Motor neuron (in vitro differentiated cells): ENCODE measurements at regions of chr9 and their contacts with region 1.

Region 1: DNA sequence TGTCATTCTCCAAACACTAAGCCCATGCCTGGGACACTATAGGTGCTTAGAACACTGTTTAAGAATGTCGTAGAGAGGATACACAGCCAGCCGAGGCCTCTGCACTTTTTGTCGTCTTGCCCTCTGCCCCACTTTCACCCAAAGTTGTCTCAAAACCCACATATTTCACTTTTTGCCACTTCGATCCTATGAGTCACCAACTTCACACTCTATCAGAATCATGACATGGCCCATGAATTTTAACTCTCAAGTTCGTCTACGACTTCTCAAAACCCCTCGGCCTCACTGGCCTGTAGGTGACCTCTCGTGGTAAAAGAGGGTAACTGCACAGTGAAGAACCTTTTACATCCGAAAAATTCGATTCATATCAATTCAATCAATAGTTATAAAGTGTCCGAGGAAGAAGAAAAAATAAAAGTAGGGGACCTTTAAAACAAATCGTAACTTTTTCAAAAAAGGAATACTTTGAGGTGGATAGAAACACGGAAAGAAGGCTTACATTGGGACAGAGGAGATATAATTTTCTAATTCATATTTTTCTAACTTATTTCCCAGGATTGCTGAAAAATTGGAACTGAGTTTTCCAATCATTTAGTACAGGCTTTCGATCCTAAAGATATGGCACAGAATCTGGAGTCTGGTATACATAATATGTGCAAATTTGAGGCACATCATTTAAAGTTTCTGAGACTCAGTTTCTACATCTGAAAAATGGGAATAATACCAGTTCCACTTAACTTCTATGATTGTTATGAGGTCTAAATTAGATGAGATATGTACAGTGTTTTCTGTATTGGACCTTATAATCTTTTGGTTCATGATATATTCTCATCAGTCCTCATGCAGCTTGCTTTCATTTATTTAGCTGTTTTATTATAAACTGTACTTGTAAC is 122.6 kb downstream of the APBA1 start:
- ATAC-seq: peak in 3 of 8 experiments; percentile 29 to 57 (median 45)
- H3K4me3 ChIP-seq: no peak overlapping the region
- H3K27ac ChIP-seq: no peak overlapping the region
- H3K4me1 ChIP-seq: peaks cover 0 to 2% of the 10 kb centered on the region in 2 donors

Region 2: GRCh38 chr9:69421908-69422801 is 127.4 kb before region 1 on chr9:
- in situ Hi-C with region 1: loop called in 3 of 9 experiments (anchors 10 to 25 kb)
- ATAC-seq: peak; percentile 61 to 80 (median 68)
- H3K4me3 ChIP-seq: no peak overlapping the region
- H3K27ac ChIP-seq: no peak overlapping the region
- H3K4me1 ChIP-seq: peaks cover 0 to 2% of the 10 kb centered on the region in 2 donors

Region 3: DNA sequence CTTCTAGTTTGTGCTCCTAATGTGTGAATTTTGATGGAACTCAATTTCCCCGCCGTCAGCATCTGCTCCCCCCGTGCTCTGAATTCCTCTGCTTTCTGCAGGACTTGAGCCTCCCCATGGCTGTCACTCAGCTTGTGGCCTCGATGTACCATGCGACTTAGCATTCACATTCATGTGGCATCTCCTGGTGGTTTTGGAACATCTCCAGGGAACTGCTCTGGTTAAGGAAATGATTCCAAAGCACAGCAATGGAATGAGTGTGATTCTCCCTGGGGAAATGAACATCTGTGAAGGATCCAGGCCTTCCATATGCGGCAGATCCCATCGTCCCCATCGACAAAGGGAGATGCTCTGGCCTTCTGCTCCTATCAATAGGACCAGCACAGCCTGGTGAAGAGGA is 105.5 kb before region 1 on chr9:
- in situ Hi-C with region 1: loop called in 1 of 9 experiments (anchors 25 kb)
- ATAC-seq: peak in 1 of 8 experiments; percentile 22
- H3K4me3 ChIP-seq: no peak overlapping the region
- H3K27ac ChIP-seq: no peak overlapping the region
- H3K4me1 ChIP-seq: peaks cover 0 to 5% of the 10 kb centered on the region in 2 donors

Region 4: GRCh38 chr9:69719367-69719766 is 169.8 kb after region 1 on chr9:
- in situ Hi-C with region 1: loop called in 1 of 9 experiments (anchors 25 kb)
- ATAC-seq: peak in 3 of 8 experiments; percentile 89 to 98 (median 92)
- H3K4me3 ChIP-seq: no peak overlapping the region
- H3K27ac ChIP-seq: no peak overlapping the region
- H3K4me1 ChIP-seq: no peaks in the 10 kb centered on the region